ENCODE measurements at regions of chr6 and their contacts with region 1.

Region 1: DNA sequence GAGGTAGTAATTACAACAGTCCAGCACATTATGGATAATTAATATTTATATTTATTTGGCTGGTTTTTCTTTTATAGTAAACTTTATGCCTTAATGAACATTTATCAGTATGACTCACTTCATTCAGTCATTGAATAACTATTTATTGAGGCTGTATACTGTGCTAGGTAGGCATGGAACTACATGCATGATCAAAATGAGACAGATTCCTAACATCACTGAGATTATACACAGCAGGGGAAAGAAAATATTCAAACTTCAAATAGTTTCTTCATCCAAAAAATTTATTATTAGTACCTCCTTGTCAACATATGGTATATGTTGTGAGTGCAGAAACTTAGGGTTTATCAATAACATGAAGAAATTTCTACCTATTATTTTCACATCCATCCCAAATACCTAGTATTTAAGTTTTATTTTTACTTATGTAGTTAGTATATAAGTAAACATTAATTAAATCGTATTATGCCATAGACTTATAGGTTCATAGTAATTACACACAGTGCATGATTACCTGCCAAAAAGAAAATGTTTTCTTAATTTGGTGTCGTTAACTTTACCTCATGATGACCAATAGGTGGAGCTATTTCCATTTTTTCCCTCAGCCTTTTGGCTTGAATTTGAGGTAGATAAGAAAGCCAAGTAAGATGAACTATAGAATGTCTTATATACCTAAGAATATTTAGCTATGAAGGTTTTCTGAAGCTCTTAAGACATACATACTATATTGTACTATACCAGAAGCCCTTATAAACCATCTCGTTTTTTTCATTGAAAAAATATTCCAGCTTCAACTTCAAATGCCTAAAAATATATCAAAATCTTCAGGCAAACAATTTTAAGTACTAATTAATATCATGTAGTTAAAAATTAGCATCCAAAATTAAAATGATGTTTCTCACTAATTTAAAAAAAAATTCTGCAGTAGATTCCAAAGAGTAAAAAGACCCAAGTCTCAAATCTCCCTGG is 12.5 kb upstream of the TMEM30A start:
- DNase-seq: peak in 2 of 4 donors; percentile 57 to 70
- ATAC-seq: peak; percentile 78
- H3K4me3 ChIP-seq: no peak overlapping the region
- H3K27ac ChIP-seq: no peak overlapping the region
- H3K4me1 ChIP-seq: peaks cover 8 to 15% of the 10 kb centered on the region in 2 donors
- H3K27me3 ChIP-seq: no peaks in the 10 kb centered on the region
- CTCF ChIP-seq: peak; percentile 60 to 70

Region 2: DNA sequence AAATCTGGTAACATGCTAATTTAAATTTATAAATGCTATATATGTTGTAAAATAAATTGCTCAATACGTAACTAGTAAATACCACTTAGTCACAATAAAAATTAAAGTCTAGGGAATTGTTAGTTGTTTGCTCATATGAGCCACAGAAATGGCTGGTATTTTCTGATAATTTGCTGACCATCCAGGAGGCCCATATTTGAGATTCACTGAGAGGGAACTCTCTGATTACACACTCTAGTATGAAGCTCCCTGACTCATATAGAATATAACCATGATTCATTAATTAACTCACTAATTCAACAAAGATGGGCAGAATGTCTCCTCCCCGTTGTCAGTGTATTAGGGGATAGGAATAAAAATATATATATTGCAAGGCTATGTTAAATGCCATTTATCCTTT is 34.0 kb after region 1 on chr6:
- intact Hi-C with region 1: no loop called
- DNase-seq: no peak
- ATAC-seq: no peak
- H3K4me3 ChIP-seq: no peak overlapping the region
- H3K27ac ChIP-seq: no peak overlapping the region
- H3K4me1 ChIP-seq: peaks cover 4% of the 10 kb centered on the region in 2 donors
- H3K27me3 ChIP-seq: no peaks in the 10 kb centered on the region
- CTCF ChIP-seq: no peak

Region 3: DNA sequence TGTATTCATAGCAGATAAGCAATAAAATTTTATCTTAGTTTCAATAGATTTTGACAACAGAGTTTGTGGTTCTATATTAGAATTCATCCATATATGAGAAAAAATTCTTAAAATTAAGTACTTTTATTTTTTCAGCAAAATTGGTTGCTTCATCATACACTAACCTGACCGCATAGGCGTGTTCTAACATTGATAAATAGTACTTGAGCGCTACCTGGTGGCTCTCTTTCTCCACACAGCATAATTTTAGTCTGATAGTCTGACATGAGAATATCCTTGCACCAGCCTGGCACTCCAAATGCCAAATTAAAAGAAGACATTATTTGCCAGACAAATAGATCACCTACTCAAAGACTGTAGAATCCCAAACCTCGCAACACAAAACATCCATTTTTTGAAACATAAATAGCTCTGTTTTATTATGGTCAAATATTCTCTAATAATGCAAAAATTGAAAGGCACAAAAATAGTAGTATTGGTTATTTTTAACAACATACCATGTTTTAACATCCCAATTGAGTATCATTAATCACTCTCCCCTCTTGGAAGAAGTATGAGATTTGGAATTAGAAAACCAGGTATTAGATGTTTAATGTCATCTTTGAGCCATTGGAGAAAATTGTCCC is 229.5 kb after region 1 on chr6:
- intact Hi-C with region 1: loop called in 1 of 2 experiments (anchors 5 kb)
- DNase-seq: peak in 2 of 4 donors; percentile 55 to 78
- ATAC-seq: peak; percentile 78
- H3K4me3 ChIP-seq: no peak overlapping the region
- H3K27ac ChIP-seq: no peak overlapping the region
- H3K4me1 ChIP-seq: peaks cover 0 to 5% of the 10 kb centered on the region in 2 donors
- H3K27me3 ChIP-seq: no peaks in the 10 kb centered on the region
- CTCF ChIP-seq: peak; percentile 48 to 52